ENCODE measurements at regions of chr14 and their contacts with region 1.

Region 1: GRCh38 chr14:56422703-56423213 is 156.8 kb upstream of the TMEM260 start:
- DNase-seq: peak; percentile 21
- ATAC-seq: no peak
- H3K4me3 ChIP-seq: no peak overlapping the region
- H3K4me3 Mint-ChIP-seq: no peak overlapping the region
- H3K27ac ChIP-seq: no peak overlapping the region
- H3K27ac Mint-ChIP-seq: no peak overlapping the region
- H3K4me1 ChIP-seq: peaks cover 0 to 2% of the 10 kb centered on the region in 2 donors
- H3K4me1 Mint-ChIP-seq: no peaks in the 10 kb centered on the region
- H3K27me3 ChIP-seq: no peaks in the 10 kb centered on the region
- H3K27me3 Mint-ChIP-seq: peaks cover 3% of the 10 kb centered on the region
- CTCF ChIP-seq: peak; percentile 48

Region 2: DNA sequence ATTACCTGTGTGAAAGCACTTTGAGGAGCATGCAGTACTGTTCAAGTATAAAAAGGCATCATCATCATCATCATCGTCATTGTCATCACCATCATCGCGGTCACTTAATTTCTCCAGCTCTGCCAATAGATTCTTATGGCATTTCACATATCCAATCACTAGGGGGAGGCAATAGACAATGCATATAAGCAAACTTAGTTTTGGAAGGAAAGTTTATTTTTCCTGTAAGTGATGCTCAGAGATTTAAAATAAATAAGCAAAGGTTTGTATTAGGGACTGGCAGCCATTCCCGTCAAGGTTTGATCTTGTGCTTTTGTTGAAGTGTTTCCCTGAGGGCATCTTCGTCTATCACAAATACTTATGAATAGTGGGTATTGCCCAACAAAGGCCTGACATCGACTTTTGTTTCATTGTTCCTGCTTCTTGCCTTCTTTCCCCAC is 715.4 kb before region 1 on chr14:
- CTCF ChIA-PET with region 1: interaction called, 3 read pairs
- POLR2A ChIA-PET with region 1: no interaction called
- intact Hi-C with region 1: loop called (anchors 2 kb)
- DNase-seq: peak; percentile 8
- ATAC-seq: no peak
- H3K4me3 ChIP-seq: no peak overlapping the region
- H3K4me3 Mint-ChIP-seq: no peak overlapping the region
- H3K27ac ChIP-seq: no peak overlapping the region
- H3K27ac Mint-ChIP-seq: no peak overlapping the region
- H3K4me1 ChIP-seq: no peaks in the 10 kb centered on the region
- H3K4me1 Mint-ChIP-seq: peaks cover 3% of the 10 kb centered on the region
- H3K27me3 ChIP-seq: no peaks in the 10 kb centered on the region
- H3K27me3 Mint-ChIP-seq: no peaks in the 10 kb centered on the region
- CTCF ChIP-seq: peak; percentile 24

Region 3: DNA sequence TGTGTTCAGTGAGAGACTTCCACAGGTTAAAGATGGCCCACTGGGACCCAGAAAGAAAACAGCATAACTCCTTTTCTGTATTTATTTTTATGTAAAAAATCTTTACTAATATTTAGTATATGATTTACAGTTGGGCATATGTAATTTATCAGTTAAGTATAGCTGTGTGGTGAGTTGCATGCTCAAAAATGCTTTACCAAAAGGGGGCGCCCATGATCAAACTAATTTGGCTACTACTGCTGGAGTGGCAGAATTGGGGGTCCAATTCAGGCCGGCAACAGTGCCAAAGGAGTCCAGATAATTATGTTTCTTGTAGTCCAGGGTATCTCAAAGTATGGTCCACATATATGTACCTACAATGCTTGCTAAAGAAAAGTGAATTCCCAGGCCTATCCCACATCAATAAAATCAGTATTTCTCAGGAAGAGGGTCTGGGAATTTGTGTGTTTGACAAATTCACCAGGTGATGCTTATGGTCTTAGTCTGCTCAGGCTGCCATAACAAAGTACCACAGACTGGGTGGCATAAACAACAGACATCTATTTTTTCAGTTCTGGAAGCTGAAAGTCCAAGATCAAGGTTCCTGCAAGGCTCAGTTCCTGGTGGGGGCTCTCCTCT is 690.8 kb before region 1 on chr14:
- CTCF ChIA-PET with region 1: interaction called, 7 read pairs
- POLR2A ChIA-PET with region 1: no interaction called
- intact Hi-C with region 1: loop called (anchors 2 kb)
- DNase-seq: peak; percentile 33
- ATAC-seq: no peak
- H3K4me3 ChIP-seq: no peak overlapping the region
- H3K4me3 Mint-ChIP-seq: no peak overlapping the region
- H3K27ac ChIP-seq: no peak overlapping the region
- H3K27ac Mint-ChIP-seq: no peak overlapping the region
- H3K4me1 ChIP-seq: no peaks in the 10 kb centered on the region
- H3K4me1 Mint-ChIP-seq: no peaks in the 10 kb centered on the region
- H3K27me3 ChIP-seq: no peaks in the 10 kb centered on the region
- H3K27me3 Mint-ChIP-seq: no peaks in the 10 kb centered on the region
- CTCF ChIP-seq: peak; percentile 62

Region 4: GRCh38 chr14:56339855-56340701 is 82.7 kb before region 1 on chr14:
- CTCF ChIA-PET with region 1: no interaction called
- POLR2A ChIA-PET with region 1: no interaction called
- intact Hi-C with region 1: no loop called
- DNase-seq: peak; percentile 60
- ATAC-seq: peak; percentile 41
- H3K4me3 ChIP-seq: no peak overlapping the region
- H3K4me3 Mint-ChIP-seq: no peak overlapping the region
- H3K27ac ChIP-seq: no peak overlapping the region
- H3K27ac Mint-ChIP-seq: no peak overlapping the region
- H3K4me1 ChIP-seq: no peaks in the 10 kb centered on the region
- H3K4me1 Mint-ChIP-seq: peaks cover 14% of the 10 kb centered on the region
- H3K27me3 ChIP-seq: no peaks in the 10 kb centered on the region
- H3K27me3 Mint-ChIP-seq: no peaks in the 10 kb centered on the region
- CTCF ChIP-seq: peak; percentile 73